ENCODE measurements at regions of chr17 and their contacts with region 1.

Region 1: GRCh38 chr17:7014261-7014994 is 2.0 kb downstream of the RNASEK start:
- DNase-seq: peak; percentile 96
- ATAC-seq: peak; percentile 84
- H3K4me3 Mint-ChIP-seq: peak overlapping the region; percentile 95
- H3K27ac Mint-ChIP-seq: peak overlapping the region; percentile 100
- H3K4me1 Mint-ChIP-seq: peaks cover 61% of the 10 kb centered on the region
- H3K27me3 Mint-ChIP-seq: no peaks in the 10 kb centered on the region
- CTCF ChIP-seq: no peak

Region 2: DNA sequence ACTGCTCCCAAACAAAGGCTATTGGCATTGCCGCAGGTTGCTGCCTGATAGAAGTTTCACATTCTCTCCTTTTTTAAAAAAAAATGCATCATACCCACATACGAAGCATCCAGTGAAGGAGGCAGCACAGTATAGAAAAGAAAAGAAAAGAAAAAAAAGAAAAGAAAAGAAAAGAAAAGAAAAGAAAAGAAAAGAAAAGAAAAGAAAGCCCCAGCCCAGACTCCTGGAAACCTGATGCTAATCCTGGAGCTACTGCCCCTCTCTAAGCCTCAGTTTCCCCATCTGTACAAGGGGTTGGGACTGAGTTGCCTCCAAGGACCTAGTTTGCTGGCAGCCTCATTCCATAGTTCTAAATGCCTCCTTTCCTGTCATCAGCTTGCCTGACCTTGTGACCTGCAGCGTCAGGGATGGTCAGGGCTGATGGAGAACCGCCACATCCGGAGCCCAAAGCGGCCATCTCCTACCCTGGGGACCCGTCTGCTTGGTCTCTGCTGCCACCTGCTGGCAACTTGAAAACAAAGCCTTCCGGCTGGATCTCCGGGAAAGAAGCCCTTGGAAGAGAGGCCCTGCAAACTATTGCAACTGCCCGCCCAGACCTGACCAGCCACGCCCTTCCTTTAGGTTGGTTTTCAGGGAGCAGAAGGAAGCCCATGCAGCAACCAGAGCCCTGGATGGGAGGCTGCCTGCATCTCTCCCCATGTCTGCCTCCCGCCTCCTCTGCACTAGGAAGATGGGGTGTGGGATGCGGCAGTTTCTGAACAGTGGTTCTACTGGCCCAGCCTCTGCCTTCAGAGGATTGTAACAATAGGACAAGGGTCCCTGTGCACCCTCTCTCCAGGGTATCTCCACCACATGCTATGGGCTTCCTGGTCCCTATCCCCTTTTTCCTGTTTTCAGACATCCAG is 592.5 kb before region 1 on chr17:
- CTCF ChIA-PET with region 1: no interaction called
- POLR2A ChIA-PET with region 1: no interaction called
- intact Hi-C with region 1: no loop called
- DNase-seq: peak; percentile 55
- ATAC-seq: peak; percentile 49
- H3K4me3 Mint-ChIP-seq: no peak overlapping the region
- H3K27ac Mint-ChIP-seq: no peak overlapping the region
- H3K4me1 Mint-ChIP-seq: peaks cover 2% of the 10 kb centered on the region
- H3K27me3 Mint-ChIP-seq: peaks cover 8% of the 10 kb centered on the region
- CTCF ChIP-seq: no peak

Region 3: DNA sequence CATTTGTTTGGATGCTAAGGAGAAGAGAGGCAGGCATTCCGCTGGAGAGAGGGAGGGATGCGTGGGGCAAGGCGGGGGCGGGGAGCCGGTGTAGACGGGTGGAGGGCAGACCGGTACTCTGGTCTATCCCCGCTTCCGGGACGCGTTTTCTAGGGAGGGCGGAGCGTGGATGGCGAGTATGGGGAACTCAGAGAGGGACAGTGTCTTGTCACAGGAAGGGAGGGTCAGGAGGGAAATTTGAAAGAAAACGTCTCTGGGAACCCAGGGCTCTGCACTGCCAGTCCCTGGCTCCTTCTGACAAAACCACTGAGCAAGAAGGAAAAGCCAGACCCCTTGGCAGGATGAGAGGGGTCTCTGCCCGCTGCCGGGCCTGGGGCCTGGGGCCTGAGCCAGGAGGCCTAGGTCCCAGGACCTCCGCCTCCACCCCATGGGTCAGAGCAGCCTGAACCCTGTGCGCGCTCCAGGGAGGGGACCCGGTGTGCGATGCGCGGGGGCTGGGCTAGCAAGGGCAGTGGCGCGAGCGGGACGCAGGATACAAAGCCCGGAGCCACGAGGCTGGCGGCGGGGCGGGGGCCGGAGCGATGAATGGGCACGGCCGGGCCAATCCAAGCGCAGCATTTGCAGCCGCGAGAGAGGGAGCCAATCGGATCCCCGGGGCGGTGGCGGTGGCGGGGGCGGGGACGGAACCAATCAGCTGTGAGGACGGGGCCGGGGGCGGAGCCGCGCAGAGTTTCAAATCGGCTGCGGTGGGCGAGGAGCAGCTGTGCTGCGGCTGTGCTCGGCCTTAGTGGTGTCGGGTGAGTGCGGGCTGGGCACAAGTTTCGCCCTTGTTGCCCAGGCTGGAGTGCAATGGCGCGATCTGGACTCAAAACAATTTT is 570.5 kb before region 1 on chr17 and contains the start of gene PIMREG:
- CTCF ChIA-PET with region 1: no interaction called
- POLR2A ChIA-PET with region 1: no interaction called
- intact Hi-C with region 1: loop called (anchors 5 kb)
- DNase-seq: peak; percentile 83
- ATAC-seq: peak; percentile 94
- H3K4me3 Mint-ChIP-seq: peak within 1 kb of the TSS; percentile 86
- H3K27ac Mint-ChIP-seq: peak within 1 kb of the TSS; percentile 74
- H3K4me1 Mint-ChIP-seq: peaks cover 13% of the 10 kb centered on the region
- H3K27me3 Mint-ChIP-seq: peaks cover 14% of the 10 kb centered on the region
- CTCF ChIP-seq: no peak
- total RNA-seq, gene PIMREG: 0.27 and 0.69 TPM in 2 replicates

Region 4: GRCh38 chr17:6651357-6651918 is 363.0 kb before region 1 on chr17 and contains the starts of genes C17orf100 and MED31:
- CTCF ChIA-PET with region 1: no interaction called
- POLR2A ChIA-PET with region 1: no interaction called
- intact Hi-C with region 1: loop called (anchors 1 kb)
- DNase-seq: peak; percentile 97
- ATAC-seq: peak; percentile 90
- H3K4me3 Mint-ChIP-seq: peak within 1 kb of the TSS; percentile 100
- H3K27ac Mint-ChIP-seq: peak within 1 kb of the TSS; percentile 100
- H3K4me1 Mint-ChIP-seq: peaks cover 69% of the 10 kb centered on the region
- H3K27me3 Mint-ChIP-seq: no peaks in the 10 kb centered on the region
- CTCF ChIP-seq: no peak
- total RNA-seq, gene C17orf100: 2.9 and 3.5 TPM in 2 replicates
- total RNA-seq, gene MED31: 16.5 and 23.4 TPM in 2 replicates

Region 5: GRCh38 chr17:6786618-6787017 is 227.8 kb before region 1 on chr17:
- CTCF ChIA-PET with region 1: no interaction called
- POLR2A ChIA-PET with region 1: no interaction called
- intact Hi-C with region 1: no loop called
- DNase-seq: no peak
- ATAC-seq: no peak
- H3K4me3 Mint-ChIP-seq: no peak overlapping the region
- H3K27ac Mint-ChIP-seq: no peak overlapping the region
- H3K4me1 Mint-ChIP-seq: no peaks in the 10 kb centered on the region
- H3K27me3 Mint-ChIP-seq: peaks cover 49% of the 10 kb centered on the region
- CTCF ChIP-seq: no peak

Region 6: GRCh38 chr17:7035591-7036368 is 21.4 kb after region 1 on chr17 and contains the start of gene SLC16A13:
- CTCF ChIA-PET with region 1: interaction called, 4 read pairs
- POLR2A ChIA-PET with region 1: interaction called, 112 read pairs
- intact Hi-C with region 1: loop called (anchors 1 kb)
- DNase-seq: peak; percentile 92
- ATAC-seq: peak; percentile 95
- H3K4me3 Mint-ChIP-seq: peak within 1 kb of the TSS; percentile 94
- H3K27ac Mint-ChIP-seq: peak within 1 kb of the TSS; percentile 98
- H3K4me1 Mint-ChIP-seq: peaks cover 42% of the 10 kb centered on the region
- H3K27me3 Mint-ChIP-seq: no peaks in the 10 kb centered on the region
- CTCF ChIP-seq: no peak
- total RNA-seq, gene SLC16A13: 10.4 and 11.8 TPM in 2 replicates

Region 7: GRCh38 chr17:7060165-7060891 is 45.9 kb after region 1 on chr17:
- CTCF ChIA-PET with region 1: no interaction called
- POLR2A ChIA-PET with region 1: no interaction called
- intact Hi-C with region 1: no loop called
- DNase-seq: no peak
- ATAC-seq: peak; percentile 14
- H3K4me3 Mint-ChIP-seq: no peak overlapping the region
- H3K27ac Mint-ChIP-seq: no peak overlapping the region
- H3K4me1 Mint-ChIP-seq: peaks cover 2% of the 10 kb centered on the region
- H3K27me3 Mint-ChIP-seq: peaks cover 24% of the 10 kb centered on the region
- CTCF ChIP-seq: no peak

Region 8: GRCh38 chr17:7281430-7281952 is 267.1 kb after region 1 on chr17 and contains the start of gene SLC2A4:
- CTCF ChIA-PET with region 1: no interaction called
- POLR2A ChIA-PET with region 1: no interaction called
- intact Hi-C with region 1: no loop called
- DNase-seq: peak; percentile 79
- ATAC-seq: peak; percentile 82
- H3K4me3 Mint-ChIP-seq: peak within 1 kb of the TSS; percentile 82
- H3K27ac Mint-ChIP-seq: peak within 1 kb of the TSS; percentile 77
- H3K4me1 Mint-ChIP-seq: peaks cover 14% of the 10 kb centered on the region
- H3K27me3 Mint-ChIP-seq: peaks cover 18% of the 10 kb centered on the region
- CTCF ChIP-seq: no peak
- total RNA-seq, gene SLC2A4: not detected in 2 replicates

Region 9: DNA sequence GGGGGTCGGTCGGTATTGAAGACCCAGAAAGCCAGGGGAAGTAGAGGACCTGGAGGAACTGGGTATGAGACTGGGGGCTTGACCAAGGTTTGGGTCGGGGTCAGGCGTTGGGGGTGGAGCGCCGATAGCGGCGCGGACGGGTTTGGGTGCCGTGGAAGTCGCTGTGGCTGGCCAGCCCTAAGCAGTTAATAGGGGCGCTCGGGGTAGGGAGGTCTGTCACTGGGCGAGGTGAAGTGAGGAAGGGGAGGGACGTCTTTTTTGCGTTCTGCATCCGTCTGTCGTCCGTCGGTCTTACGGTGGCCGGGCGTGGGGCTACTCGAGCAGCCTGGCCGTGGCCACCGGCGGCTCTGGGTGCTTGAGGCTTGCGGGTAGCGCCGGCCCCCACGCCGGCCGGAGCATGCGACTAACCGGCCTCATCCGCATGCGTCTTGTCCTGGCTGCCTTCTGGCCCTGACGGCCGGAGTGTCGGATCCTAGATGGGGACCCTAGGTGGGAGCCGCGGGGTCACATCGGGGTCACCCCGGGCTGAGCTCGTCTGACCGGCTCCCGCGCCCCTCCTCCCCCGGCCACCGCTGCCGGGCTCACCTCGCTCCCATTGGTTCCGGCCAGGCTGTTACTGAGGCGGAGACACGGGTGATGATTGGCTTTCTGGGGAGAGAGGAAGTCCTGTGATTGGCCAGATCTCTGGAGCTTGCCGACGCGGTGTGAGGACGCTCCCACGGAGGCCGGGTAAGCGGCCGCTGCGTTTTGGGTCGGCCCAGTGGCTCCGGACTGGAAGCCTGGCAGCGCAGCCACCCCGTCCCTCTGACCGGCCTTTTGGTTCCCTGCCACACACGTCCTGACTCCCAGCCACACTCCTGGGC is 830.1 kb after region 1 on chr17:
- CTCF ChIA-PET with region 1: no interaction called
- POLR2A ChIA-PET with region 1: no interaction called
- intact Hi-C with region 1: loop called (anchors 2 kb)
- DNase-seq: peak; percentile 83
- ATAC-seq: peak; percentile 46
- H3K4me3 Mint-ChIP-seq: peak overlapping the region; percentile 98
- H3K27ac Mint-ChIP-seq: peak overlapping the region; percentile 100
- H3K4me1 Mint-ChIP-seq: peaks cover 50% of the 10 kb centered on the region
- H3K27me3 Mint-ChIP-seq: no peaks in the 10 kb centered on the region
- CTCF ChIP-seq: no peak